Activated CD4-positive, alpha-beta T cell treated with anti-CD3 and anti-CD28 coated beads, Interleukin-2, amount 10 ng/mL, durations not matched to agents 7 days and 5 days (primary cell): ENCODE measurements at regions of chr10 and their contacts with region 1.

Region 1: DNA sequence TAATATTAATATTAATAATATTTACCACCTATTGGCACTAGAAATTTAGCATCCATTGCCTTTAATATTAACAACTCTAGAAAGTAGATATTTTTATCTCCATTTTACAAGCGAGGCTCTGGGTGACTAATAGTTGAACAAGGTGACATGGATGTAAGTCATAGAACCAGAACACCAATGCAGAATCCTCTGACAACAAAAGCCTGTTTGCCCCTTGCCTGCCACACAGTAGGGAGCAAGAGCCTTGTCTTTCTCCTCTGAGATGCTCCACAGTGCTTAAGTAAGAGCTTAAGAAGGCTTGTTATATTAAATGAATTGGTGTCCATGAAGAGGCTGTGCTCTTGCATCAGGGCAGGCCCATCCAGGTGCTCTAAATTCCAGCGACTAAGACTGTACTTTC is 51.2 kb upstream of the LBX1 start:
- DNase-seq: no peak
- H3K4me3 Mint-ChIP-seq: no peak overlapping the region
- H3K27ac Mint-ChIP-seq: no peak overlapping the region
- H3K4me1 Mint-ChIP-seq: peaks cover 2% of the 10 kb centered on the region
- H3K27me3 Mint-ChIP-seq: peaks cover 49% of the 10 kb centered on the region

Region 2: DNA sequence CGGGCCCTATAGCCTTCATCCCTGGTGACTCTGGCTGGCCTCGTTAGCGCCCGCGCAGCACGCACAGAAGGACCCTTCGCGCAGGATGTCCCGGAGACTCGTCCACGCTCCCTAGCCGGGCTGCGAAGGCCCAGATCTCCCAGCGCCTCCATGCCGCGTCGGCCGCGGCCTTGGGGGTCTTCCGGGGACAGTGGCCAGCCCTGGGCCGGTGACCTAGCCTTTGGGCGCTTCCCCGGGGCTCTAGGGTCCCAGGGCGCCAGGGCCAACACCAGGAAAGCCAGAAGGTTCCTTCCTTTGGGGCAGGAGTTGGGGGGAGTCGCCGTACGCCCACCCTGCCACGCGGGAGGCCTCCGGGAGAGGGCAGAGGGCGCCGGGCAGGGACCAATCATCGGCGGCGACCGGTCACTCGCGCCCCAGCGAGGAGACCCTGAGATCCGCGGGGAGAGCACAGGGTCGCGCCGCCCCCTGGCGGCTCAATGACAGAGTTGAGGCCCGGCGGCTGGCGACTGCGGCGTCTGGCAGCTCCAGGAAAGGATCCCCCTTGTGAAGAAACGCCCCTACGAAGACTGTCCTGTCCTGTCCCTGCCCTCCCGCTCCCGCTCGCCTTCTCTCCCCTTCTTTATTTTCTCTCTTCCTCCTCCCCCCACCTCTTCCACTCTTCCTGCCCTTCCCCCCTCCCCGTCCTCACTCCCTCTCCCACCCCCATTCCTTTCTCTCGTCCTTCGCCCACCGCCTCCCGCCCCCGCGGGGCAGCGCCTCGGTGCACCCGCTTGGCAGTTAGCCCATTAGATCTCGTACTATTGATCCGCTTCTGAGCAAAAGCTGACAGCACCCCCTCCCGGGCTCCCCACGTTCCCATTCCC is 11.1 kb after region 1 on chr10:
- CTCF ChIA-PET with region 1: interaction called, 18 read pairs
- POLR2A ChIA-PET with region 1: no interaction called
- DNase-seq: peak; percentile 30
- H3K4me3 Mint-ChIP-seq: peak overlapping the region; percentile 31
- H3K27ac Mint-ChIP-seq: no peak overlapping the region
- H3K4me1 Mint-ChIP-seq: peaks cover 4% of the 10 kb centered on the region
- H3K27me3 Mint-ChIP-seq: peaks cover 77% of the 10 kb centered on the region

Region 3: DNA sequence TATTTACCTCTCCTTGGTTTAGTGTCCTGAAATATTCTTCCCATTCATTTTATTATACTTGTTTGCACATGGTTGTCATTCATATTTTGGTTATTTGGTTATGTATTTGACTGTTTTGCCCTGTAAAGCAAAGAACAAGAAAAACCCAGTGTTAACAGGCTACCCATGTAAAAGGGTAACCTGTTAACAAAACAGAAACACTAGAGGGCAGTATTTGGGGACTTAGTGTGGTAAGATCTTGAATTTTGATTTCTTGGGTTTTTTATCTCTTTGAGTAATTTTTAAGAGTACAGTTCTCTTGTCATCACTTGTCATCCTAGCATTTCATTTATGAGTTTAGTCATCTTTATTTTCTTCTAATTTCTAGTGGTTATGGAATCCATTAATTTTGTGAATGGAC is 256.3 kb after region 1 on chr10:
- CTCF ChIA-PET with region 1: no interaction called
- POLR2A ChIA-PET with region 1: no interaction called
- DNase-seq: no peak
- H3K4me3 Mint-ChIP-seq: no peak overlapping the region
- H3K27ac Mint-ChIP-seq: no peak overlapping the region
- H3K4me1 Mint-ChIP-seq: peaks cover 3% of the 10 kb centered on the region
- H3K27me3 Mint-ChIP-seq: no peaks in the 10 kb centered on the region